H1 (cell line): ENCODE measurements at regions of chr9 and their contacts with region 1.

Region 1: DNA sequence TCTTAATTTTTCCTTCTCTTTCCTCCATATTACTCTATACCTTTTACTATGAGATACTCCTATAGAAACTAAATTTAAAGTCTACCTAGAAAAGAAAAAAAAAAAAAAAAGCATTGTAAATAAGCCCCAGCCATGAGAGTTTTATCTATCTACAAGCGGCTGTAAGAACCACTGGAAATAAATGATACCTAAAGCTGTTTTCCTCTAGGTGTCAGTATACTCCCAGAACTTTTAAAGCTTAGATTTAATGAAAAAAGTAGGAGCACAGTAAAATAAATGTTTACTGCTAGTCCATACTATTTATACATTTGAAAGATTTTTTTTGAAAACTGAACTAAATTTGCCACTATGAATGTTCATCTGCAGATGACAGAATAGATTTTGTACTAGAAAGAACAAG is 26.2 kb downstream of the TYRP1 start:
- DNase-seq: no peak
- H3K4me3 ChIP-seq: peak overlapping the region in 1 of 4 experiments; percentile 47; a peak in 1 of 8 replicates
- H3K27ac ChIP-seq: no peak overlapping the region
- H3K4me1 ChIP-seq: peaks cover 0 to 8% (median 3%) of the 10 kb centered on the region in 4 experiments; a peak in 4 of 7 replicates
- H3K27me3 ChIP-seq: no peaks in the 10 kb centered on the region
- CTCF ChIP-seq: peak in 2 of 3 experiments; percentile 15 to 34; a peak in 2 of 4 replicates
- EP300 ChIP-seq: no peak
- POLR2A ChIP-seq: no peak
- RAD21 ChIP-seq: peak; percentile 51 to 67

Region 2: DNA sequence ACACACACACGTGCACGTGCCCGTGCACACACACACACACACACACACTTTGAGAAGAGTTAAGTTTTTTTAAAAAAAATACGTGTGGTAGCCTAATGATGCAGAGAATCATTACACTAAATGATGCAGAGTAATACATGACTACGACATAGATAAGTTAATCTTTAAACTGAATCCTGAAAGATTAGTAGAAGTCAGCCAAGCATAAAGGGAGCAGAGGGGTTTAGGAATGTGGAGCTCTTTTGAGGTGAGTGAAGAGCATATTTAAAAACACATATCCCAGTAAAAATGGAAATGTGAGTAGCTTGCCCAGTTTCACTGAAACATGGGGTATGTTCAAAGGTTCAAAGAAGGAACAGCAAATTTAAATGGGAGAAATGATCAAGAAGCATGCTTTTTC is 87.6 kb before region 1 on chr9:
- CTCF ChIA-PET with region 1: no interaction called
- POLR2A ChIA-PET with region 1: no interaction called
- DNase-seq: no peak
- H3K4me3 ChIP-seq: no peak overlapping the region
- H3K27ac ChIP-seq: no peak overlapping the region
- H3K4me1 ChIP-seq: peaks cover 0 to 3% (median 1%) of the 10 kb centered on the region in 4 experiments; a peak in 2 of 7 replicates
- H3K27me3 ChIP-seq: no peaks in the 10 kb centered on the region
- CTCF ChIP-seq: no peak
- EP300 ChIP-seq: no peak
- POLR2A ChIP-seq: no peak
- RAD21 ChIP-seq: no peak

Region 3: DNA sequence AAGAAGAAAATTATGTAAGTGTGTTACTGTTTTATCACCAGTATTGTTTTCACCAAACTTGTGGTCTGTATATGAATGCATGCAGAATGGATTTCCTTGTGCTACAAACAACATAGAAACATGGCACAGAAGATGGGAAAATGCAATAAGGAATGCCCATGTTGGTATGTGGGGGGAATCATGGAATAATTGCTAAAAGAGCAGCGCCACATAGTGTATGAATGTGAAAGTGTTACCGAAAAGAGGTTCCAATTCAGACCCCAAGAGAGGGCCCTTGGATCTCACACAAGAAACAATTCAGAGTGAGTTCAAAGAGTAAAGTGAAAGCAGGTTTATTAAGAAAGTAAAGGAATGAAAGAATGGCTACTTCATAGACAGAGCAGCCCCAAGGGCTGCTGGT is 52.6 kb before region 1 on chr9:
- CTCF ChIA-PET with region 1: no interaction called
- POLR2A ChIA-PET with region 1: no interaction called
- DNase-seq: no peak
- H3K4me3 ChIP-seq: no peak overlapping the region
- H3K27ac ChIP-seq: no peak overlapping the region
- H3K4me1 ChIP-seq: no peaks in the 10 kb centered on the region
- H3K27me3 ChIP-seq: no peaks in the 10 kb centered on the region
- CTCF ChIP-seq: peak in 2 of 3 experiments; percentile 21 to 45; a peak in 2 of 4 replicates
- EP300 ChIP-seq: no peak
- POLR2A ChIP-seq: no peak
- RAD21 ChIP-seq: peak; percentile 62

Region 4: GRCh38 chr9:12775679-12776512 is 56.5 kb after region 1 on chr9:
- CTCF ChIA-PET with region 1: interaction called, 30 read pairs
- POLR2A ChIA-PET with region 1: no interaction called
- DNase-seq: peak; percentile 49 to 75
- H3K4me3 ChIP-seq: peak overlapping the region; percentile 60 to 75 (median 71)
- H3K27ac ChIP-seq: no peak overlapping the region
- H3K4me1 ChIP-seq: no peaks in the 10 kb centered on the region
- H3K27me3 ChIP-seq: peaks cover 0 to 14% (median 8%) of the 10 kb centered on the region in 4 experiments; a peak in 6 of 7 replicates
- CTCF ChIP-seq: peak; percentile 37 to 63 (median 57)
- EP300 ChIP-seq: no peak
- POLR2A ChIP-seq: no peak
- RAD21 ChIP-seq: peak; percentile 47 to 53; a peak in 3 of 4 replicates

Region 5: DNA sequence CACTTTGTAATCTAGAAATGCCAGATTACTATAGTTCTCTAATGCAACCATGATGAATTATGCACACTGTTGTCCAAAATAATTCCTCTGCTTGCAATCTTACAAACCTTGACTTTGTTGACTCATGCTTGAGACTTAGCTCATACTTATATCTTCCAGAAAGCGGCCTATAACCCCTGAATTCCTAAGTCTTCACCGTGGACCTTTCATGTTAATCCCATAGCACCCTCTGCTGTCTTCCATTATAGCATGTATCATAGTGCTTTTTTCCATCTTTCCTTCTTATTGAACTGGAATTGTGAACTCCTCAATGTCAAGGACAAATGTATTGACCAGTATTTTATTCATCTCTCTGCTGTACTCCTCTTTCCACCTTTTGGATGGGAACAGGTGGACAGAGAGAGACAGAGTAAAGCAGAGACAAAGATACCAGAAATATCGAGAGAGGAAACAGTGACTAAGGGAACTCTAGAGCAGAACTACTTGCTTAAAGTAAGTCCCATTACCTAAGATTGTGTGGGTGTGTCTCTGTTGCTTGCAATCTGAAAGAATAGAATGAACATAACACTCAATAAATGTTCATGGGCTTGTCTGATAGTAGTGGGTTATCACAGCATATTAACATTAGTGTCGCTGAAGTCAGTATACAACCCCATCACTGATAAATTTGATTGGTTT is 165.4 kb after region 1 on chr9:
- CTCF ChIA-PET with region 1: interaction called, 10 read pairs
- POLR2A ChIA-PET with region 1: no interaction called
- DNase-seq: no peak
- H3K4me3 ChIP-seq: no peak overlapping the region
- H3K27ac ChIP-seq: no peak overlapping the region
- H3K4me1 ChIP-seq: 0 out of 7 replicates have a peak, but pooled peaks cover 0 to 2% (median 0%) of the 10 kb centered on the region in 4 experiments
- H3K27me3 ChIP-seq: no peaks in the 10 kb centered on the region
- CTCF ChIP-seq: peak in 2 of 3 experiments; percentile 47 to 52; a peak in 2 of 4 replicates
- EP300 ChIP-seq: no peak
- POLR2A ChIP-seq: no peak
- RAD21 ChIP-seq: peak; percentile 73 to 78